RWPE1 (cell line): ENCODE measurements at regions of chr2 and their contacts with region 1.

Region 1: GRCh38 chr2:112836695-112837117 is at the start of gene IL1B:
- DNase-seq: peak; percentile 90
- H3K27ac ChIP-seq: peak within 1 kb of the TSS; percentile 79
- CTCF ChIP-seq: no peak

Region 2: GRCh38 chr2:112784199-112785189 is 52.2 kb before region 1 on chr2 and contains the start of gene IL1A:
- CTCF ChIA-PET with region 1: no interaction called
- POLR2A ChIA-PET with region 1: no interaction called
- DNase-seq: peak; percentile 84
- H3K27ac ChIP-seq: peak within 1 kb of the TSS; percentile 52; the same call in 1 of the 2 replicates
- CTCF ChIP-seq: no peak

Region 3: GRCh38 chr2:112941753-112942658 is 105.3 kb after region 1 on chr2:
- CTCF ChIA-PET with region 1: interaction called, 20 read pairs
- POLR2A ChIA-PET with region 1: no interaction called
- DNase-seq: peak; percentile 63
- H3K27ac ChIP-seq: peak overlapping the region; percentile 45
- CTCF ChIP-seq: peak; percentile 86